ENCODE measurements at regions of chr1 and their contacts with region 1.

Region 1: DNA sequence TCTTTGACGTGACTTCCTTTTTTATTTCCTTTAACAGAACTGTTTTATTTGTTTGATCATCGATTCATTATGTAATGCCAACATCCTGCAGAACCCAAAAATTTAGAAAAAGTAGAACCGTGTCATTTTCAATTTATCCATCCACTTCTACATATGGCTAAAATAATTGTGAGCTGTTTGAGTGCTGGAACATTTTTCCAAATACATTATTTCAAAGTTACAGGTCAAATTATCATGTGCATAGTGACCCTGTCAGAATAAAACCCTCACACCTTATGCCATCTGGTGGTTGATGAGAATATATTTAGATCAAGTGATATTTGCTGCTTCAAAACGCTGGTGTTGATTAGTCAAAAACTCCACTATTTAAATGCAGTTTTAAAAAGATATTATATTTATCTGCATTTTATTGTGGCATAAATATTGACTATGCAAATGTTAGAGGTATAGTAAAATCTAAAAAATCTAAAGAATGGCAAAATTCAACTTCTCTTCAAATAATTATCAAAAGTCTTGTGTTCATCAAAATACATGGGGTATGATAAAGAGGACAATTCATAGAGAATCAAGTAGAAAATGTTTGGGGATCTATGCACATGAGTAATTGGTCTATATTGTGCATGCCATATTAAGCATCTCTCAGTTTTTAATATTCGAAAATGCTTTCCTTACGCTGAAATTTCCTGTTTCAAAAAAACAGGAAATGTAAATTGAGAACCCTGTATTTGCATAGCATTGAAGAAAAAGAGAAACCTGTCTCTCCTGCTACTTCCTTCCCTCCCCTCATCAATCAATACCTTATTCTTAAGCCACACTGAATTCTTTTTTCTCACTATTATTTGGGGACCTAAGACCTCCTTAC is 39.7 kb downstream of the UBE2U start:
- DNase-seq: no peak
- H3K4me3 ChIP-seq: no peak overlapping the region
- H3K27ac ChIP-seq: no peak overlapping the region
- H3K4me1 ChIP-seq: peaks cover 15% of the 10 kb centered on the region
- H3K27me3 ChIP-seq: no peaks in the 10 kb centered on the region
- CTCF ChIP-seq: peak; percentile 85

Region 2: DNA sequence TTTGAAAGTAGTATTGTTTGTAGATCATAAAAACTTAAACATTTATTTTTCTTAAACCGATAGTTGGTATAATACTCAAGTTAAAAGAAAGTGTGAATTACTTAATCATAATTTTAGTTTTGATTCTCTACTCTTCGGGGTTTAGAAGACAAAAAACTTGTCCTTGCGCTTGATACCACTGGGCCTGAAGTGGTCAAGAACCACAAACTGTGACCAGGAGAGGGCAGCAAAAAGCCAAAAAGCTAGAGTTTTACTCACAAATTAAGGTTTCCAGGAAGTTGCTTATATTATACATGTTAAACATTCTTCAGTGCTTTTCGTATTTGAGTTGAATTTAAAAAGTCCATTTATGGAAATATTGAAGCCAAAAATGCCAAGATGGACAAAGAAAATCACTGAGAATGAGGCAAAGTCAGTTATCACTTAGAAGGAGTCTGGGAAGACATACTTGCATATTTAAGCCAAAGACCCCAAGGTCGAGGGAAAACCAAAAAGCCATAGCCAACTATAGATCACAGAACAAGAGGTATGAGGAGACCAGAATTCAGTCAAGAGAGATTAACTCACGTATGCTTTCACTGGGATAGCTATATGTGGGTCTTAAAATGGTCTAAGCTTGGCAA is 685.6 kb before region 1 on chr1:
- CTCF ChIA-PET with region 1: no interaction called
- POLR2A ChIA-PET with region 1: no interaction called
- intact Hi-C with region 1: loop called (anchors 1 kb)
- DNase-seq: peak in 1 of 2 experiments; percentile 43
- H3K4me3 ChIP-seq: no peak overlapping the region
- H3K27ac ChIP-seq: no peak overlapping the region
- H3K4me1 ChIP-seq: no peaks in the 10 kb centered on the region
- H3K27me3 ChIP-seq: no peaks in the 10 kb centered on the region
- CTCF ChIP-seq: peak; percentile 72

Region 3: GRCh38 chr1:63615768-63616420 is 627.2 kb before region 1 on chr1:
- CTCF ChIA-PET with region 1: no interaction called
- POLR2A ChIA-PET with region 1: no interaction called
- intact Hi-C with region 1: loop called (anchors 1 kb)
- DNase-seq: peak; percentile 61 to 63
- H3K4me3 ChIP-seq: no peak overlapping the region
- H3K27ac ChIP-seq: no peak overlapping the region
- H3K4me1 ChIP-seq: peaks cover 38% of the 10 kb centered on the region
- H3K27me3 ChIP-seq: no peaks in the 10 kb centered on the region
- CTCF ChIP-seq: peak; percentile 91

Region 4: DNA sequence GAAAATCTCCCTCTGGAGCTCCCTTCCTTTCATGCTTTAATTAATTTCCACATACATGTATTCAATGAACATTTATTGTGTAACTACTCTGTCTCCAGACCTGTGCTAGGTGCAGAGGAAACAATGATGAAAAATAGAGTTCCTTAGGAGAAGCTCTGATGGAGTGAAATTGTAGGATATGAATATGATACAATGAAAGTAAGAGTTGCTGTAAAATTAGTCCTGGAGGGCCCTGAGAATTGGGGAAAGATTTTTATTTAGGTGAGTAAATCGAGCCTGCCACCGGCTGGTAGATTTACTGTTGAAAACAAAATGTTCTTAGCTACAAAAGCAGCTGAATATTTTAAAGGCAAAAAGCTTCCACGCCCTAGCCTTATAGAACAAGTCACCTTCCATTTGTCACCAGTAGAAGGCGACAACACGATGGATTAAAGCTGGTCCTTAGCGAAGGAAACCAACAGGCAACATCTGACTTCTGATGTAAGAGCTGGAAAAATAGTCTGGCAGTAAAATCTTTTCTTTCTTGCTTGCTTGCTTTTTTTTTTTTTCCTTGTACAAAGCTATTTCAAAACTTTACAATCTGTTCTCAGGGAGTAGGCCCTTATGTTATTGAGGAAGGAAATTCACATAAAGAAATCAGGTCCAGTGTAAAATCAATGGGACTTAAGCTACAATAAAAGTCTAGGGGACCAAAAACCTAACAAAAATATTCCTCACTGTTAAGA is 551.3 kb before region 1 on chr1:
- CTCF ChIA-PET with region 1: interaction called, 8 read pairs
- POLR2A ChIA-PET with region 1: no interaction called
- intact Hi-C with region 1: loop called (anchors 1 kb)
- DNase-seq: peak; percentile 62 to 86
- H3K4me3 ChIP-seq: no peak overlapping the region
- H3K27ac ChIP-seq: peak overlapping the region; percentile 61
- H3K4me1 ChIP-seq: peaks cover 11% of the 10 kb centered on the region
- H3K27me3 ChIP-seq: no peaks in the 10 kb centered on the region
- CTCF ChIP-seq: peak; percentile 88

Region 5: GRCh38 chr1:64013404-64013803 is 229.7 kb before region 1 on chr1:
- CTCF ChIA-PET with region 1: no interaction called
- POLR2A ChIA-PET with region 1: no interaction called
- intact Hi-C with region 1: no loop called
- DNase-seq: no peak
- H3K4me3 ChIP-seq: no peak overlapping the region
- H3K27ac ChIP-seq: no peak overlapping the region
- H3K4me1 ChIP-seq: peaks cover 7% of the 10 kb centered on the region; the same call in 1 of the 2 replicates
- H3K27me3 ChIP-seq: no peaks in the 10 kb centered on the region
- CTCF ChIP-seq: no peak

Region 6: DNA sequence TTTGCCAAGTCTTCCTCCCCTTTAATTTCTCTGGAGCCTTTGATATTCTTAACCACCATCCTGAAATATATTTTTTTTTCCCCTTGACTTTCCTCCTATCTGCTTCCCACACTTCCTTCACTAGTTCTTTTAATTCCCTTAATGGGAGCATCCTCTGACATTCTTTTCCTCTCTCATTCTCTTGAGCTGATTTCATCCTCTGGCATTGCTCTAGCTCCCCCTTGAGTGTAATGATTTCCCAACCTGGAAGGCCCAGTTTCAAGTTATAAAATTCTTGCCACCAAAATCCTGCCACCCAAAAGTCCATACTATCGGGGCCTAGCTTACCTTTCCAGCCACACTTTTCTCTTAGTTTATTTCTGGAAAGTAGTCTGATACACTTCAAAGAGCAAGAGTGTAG is 79.2 kb before region 1 on chr1:
- CTCF ChIA-PET with region 1: no interaction called
- POLR2A ChIA-PET with region 1: no interaction called
- intact Hi-C with region 1: loop called (anchors 2 kb)
- DNase-seq: no peak
- H3K4me3 ChIP-seq: no peak overlapping the region
- H3K27ac ChIP-seq: no peak overlapping the region
- H3K4me1 ChIP-seq: no peaks in the 10 kb centered on the region
- H3K27me3 ChIP-seq: no peaks in the 10 kb centered on the region
- CTCF ChIP-seq: peak; percentile 45; the same call in 1 of the 2 replicates